AG04449 (cell line): ENCODE measurements at regions of chr10 and their contacts with region 1.

Region 1: GRCh38 chr10:100518761-100519241 is 860 bp downstream of the SEC31B start:
- DNase-seq: no peak
- H3K4me3 ChIP-seq: no peak overlapping the region
- CTCF ChIP-seq: peak; percentile 58

Region 2: DNA sequence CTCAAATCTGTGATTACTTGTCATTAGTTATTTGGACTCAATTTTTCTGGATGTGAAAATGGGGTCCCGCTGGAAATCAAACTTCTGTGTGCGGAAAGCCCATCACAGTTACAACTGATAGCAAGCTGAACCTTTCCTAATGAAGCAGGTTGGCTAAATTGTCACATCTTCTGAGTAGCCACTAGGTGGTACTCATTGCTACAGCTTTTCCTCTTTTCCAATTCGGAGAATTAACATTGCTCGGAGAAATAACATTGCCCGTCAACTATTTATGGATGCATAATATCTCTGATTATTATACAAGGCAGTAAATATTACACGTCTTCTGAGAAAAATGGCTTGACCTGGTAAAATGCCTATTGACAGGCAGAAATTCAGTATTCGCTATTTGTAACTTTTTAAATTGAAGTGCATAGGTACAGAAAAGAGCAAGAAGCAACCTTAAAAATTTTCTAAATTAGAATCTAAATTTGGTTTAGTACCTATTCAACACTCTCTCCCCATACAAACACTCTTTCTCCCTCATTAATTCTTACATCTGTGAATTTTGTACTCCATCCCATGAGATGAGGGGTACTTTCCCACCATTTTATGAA is 215.0 kb before region 1 on chr10:
- CTCF ChIA-PET with region 1: interaction called, 11 read pairs
- POLR2A ChIA-PET with region 1: no interaction called
- DNase-seq: no peak
- H3K4me3 ChIP-seq: no peak overlapping the region
- CTCF ChIP-seq: peak; percentile 42

Region 3: DNA sequence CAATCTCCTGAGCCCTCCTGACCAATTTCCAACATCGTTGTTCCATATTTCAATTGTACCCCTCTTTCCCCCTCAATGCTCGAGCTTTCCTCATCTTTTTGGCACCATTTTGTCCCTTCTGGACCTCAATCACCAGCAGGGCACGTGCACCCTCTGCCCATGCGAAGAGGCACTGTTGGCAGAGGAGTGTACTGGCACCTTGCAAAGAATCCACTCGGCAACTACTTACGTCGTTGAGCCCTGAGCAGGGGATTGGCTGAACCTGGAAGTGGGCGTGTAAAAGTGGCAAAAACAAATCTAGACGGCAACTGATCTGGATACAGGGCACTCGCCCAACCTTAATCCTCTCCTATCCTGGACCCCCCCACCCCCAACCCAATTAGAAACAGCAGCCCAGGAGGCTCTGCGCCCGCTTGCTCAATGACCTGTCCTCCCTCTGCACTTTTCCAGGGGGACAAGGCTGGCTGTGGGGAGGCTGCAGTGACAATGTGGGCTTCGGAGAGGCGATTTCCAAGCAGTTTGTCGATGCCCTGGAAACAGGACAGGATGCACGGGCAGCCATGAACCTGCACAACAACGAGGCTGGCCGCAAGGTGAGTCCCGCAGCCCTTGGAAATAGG is 37.2 kb before region 1 on chr10:
- CTCF ChIA-PET with region 1: interaction called, 422 read pairs
- POLR2A ChIA-PET with region 1: interaction called, 3 read pairs
- DNase-seq: no peak
- H3K4me3 ChIP-seq: peak overlapping the region; percentile 53
- CTCF ChIP-seq: no peak

Region 4: GRCh38 chr10:100508691-100509150 is 10.1 kb before region 1 on chr10:
- CTCF ChIA-PET with region 1: interaction called, 155 read pairs
- POLR2A ChIA-PET with region 1: no interaction called
- DNase-seq: no peak
- H3K4me3 ChIP-seq: no peak overlapping the region
- CTCF ChIP-seq: peak; percentile 63

Region 5: GRCh38 chr10:100535715-100536353 is 17.0 kb after region 1 on chr10 and contains the start of gene HIF1AN:
- CTCF ChIA-PET with region 1: interaction called, 59 read pairs
- POLR2A ChIA-PET with region 1: interaction called, 5 read pairs
- DNase-seq: peak; percentile 63
- H3K4me3 ChIP-seq: peak within 1 kb of the TSS; percentile 67
- CTCF ChIP-seq: peak; percentile 95